Activated CD8-positive, alpha-beta T cell treated with anti-CD3 and anti-CD28 coated beads, Interleukin-2, amount 10 ng/mL, durations not matched to agents 7 days and 5 days (primary cell): ENCODE measurements at regions of chr5 and their contacts with region 1.

Region 1: GRCh38 chr5:113330533-113331208 is 104.1 kb downstream of the TSSK1B start:
- DNase-seq: peak; percentile 52
- ATAC-seq: peak; percentile 69
- H3K4me3 Mint-ChIP-seq: no peak overlapping the region
- H3K27ac Mint-ChIP-seq: peak overlapping the region; percentile 25
- H3K4me1 Mint-ChIP-seq: peaks cover 26% of the 10 kb centered on the region
- H3K27me3 Mint-ChIP-seq: peaks cover 2% of the 10 kb centered on the region

Region 2: DNA sequence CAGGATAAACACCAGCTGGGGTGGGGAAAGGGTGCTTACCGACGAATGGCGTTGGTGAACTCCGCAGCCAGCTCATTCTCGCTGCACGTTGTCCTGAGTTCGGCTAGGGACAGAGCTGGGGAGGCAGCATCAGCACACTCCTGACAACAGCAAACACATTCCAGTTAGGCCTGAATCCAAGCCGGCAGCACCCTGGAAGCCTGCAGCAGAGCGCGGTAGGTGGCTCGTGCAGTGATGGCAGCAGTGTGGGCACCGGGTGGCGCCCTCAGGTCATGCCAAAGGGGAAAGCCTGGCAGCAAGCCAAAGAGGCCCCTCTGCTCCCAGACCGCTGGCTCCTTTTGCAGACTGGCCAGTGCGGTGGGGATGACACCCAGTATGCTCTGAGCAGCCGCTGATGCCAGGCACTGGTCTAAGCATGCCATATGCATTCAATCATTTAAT is 287.2 kb before region 1 on chr5:
- CTCF ChIA-PET with region 1: interaction called, 11 read pairs
- POLR2A ChIA-PET with region 1: no interaction called
- DNase-seq: peak; percentile 47
- ATAC-seq: peak; percentile 53
- H3K4me3 Mint-ChIP-seq: no peak overlapping the region
- H3K27ac Mint-ChIP-seq: no peak overlapping the region
- H3K4me1 Mint-ChIP-seq: no peaks in the 10 kb centered on the region
- H3K27me3 Mint-ChIP-seq: no peaks in the 10 kb centered on the region

Region 3: GRCh38 chr5:113294311-113295110 is 36.2 kb before region 1 on chr5:
- CTCF ChIA-PET with region 1: interaction called, 14 read pairs
- POLR2A ChIA-PET with region 1: no interaction called
- DNase-seq: peak; percentile 87
- ATAC-seq: peak; percentile 92
- H3K4me3 Mint-ChIP-seq: peak overlapping the region; percentile 90
- H3K27ac Mint-ChIP-seq: peak overlapping the region; percentile 83
- H3K4me1 Mint-ChIP-seq: peaks cover 17% of the 10 kb centered on the region
- H3K27me3 Mint-ChIP-seq: peaks cover 43% of the 10 kb centered on the region

Region 4: GRCh38 chr5:113319256-113320053 is 11.2 kb before region 1 on chr5:
- CTCF ChIA-PET with region 1: interaction called, 10 read pairs
- POLR2A ChIA-PET with region 1: no interaction called
- DNase-seq: no peak
- ATAC-seq: no peak
- H3K4me3 Mint-ChIP-seq: no peak overlapping the region
- H3K27ac Mint-ChIP-seq: no peak overlapping the region
- H3K4me1 Mint-ChIP-seq: no peaks in the 10 kb centered on the region
- H3K27me3 Mint-ChIP-seq: peaks cover 4% of the 10 kb centered on the region

Region 5: GRCh38 chr5:113435575-113435974 is 104.9 kb after region 1 on chr5:
- CTCF ChIA-PET with region 1: no interaction called
- POLR2A ChIA-PET with region 1: no interaction called
- DNase-seq: no peak
- ATAC-seq: no peak
- H3K4me3 Mint-ChIP-seq: no peak overlapping the region
- H3K27ac Mint-ChIP-seq: no peak overlapping the region
- H3K4me1 Mint-ChIP-seq: no peaks in the 10 kb centered on the region
- H3K27me3 Mint-ChIP-seq: peaks cover 18% of the 10 kb centered on the region

Region 6: DNA sequence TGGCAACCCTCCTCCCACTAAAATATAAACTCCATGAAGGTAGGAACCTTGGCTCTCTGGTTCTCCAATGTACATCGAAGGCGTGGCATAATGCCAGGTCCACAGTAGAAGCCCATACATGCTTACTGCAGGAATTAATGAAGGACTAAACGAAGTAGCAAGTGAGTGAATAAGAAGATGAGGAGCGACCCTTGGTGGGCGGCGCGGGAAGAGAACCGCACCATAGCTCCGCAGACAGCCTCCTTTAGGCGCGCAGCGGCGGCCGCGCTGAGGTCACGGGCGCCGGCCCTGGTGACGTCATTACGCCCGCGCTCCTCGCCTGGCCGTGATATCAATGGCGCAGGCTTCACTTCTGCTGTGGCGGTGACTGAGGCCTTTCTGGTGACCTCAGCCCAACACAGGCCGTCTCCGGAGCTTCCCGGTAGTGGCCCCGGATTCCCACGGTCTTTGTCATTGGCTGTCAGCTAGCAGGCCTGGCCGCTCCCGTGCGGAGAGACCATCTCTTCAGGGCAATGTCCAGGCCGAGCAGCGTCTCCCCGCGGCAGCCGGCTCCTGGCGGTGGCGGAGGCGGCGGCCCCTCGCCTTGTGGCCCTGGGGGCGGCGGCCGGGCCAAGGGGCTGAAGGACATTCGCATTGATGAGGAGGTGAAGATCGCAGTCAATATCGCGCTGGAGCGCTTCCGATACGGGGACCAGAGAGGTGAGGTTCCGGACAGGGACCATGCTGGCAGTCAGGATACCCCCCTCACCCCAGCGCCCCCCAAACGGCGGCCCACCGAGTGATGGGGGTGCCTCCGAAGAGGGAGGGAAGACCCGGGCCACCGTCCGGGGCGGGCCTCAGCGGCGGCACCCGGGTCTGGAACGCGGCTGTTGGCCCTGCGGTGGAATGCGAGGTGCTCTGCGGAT is 183.0 kb after region 1 on chr5 and contains the start of gene YTHDC2:
- CTCF ChIA-PET with region 1: interaction called, 129 read pairs
- POLR2A ChIA-PET with region 1: no interaction called
- DNase-seq: peak; percentile 90
- ATAC-seq: peak; percentile 94
- H3K4me3 Mint-ChIP-seq: peak within 1 kb of the TSS; percentile 92
- H3K27ac Mint-ChIP-seq: peak within 1 kb of the TSS; percentile 92
- H3K4me1 Mint-ChIP-seq: peaks cover 39% of the 10 kb centered on the region
- H3K27me3 Mint-ChIP-seq: peaks cover 16% of the 10 kb centered on the region
- total RNA-seq, gene YTHDC2: 30.3 to 34.1 TPM